ENCODE measurements at regions of chr14 and their contacts with region 1.

Region 1: DNA sequence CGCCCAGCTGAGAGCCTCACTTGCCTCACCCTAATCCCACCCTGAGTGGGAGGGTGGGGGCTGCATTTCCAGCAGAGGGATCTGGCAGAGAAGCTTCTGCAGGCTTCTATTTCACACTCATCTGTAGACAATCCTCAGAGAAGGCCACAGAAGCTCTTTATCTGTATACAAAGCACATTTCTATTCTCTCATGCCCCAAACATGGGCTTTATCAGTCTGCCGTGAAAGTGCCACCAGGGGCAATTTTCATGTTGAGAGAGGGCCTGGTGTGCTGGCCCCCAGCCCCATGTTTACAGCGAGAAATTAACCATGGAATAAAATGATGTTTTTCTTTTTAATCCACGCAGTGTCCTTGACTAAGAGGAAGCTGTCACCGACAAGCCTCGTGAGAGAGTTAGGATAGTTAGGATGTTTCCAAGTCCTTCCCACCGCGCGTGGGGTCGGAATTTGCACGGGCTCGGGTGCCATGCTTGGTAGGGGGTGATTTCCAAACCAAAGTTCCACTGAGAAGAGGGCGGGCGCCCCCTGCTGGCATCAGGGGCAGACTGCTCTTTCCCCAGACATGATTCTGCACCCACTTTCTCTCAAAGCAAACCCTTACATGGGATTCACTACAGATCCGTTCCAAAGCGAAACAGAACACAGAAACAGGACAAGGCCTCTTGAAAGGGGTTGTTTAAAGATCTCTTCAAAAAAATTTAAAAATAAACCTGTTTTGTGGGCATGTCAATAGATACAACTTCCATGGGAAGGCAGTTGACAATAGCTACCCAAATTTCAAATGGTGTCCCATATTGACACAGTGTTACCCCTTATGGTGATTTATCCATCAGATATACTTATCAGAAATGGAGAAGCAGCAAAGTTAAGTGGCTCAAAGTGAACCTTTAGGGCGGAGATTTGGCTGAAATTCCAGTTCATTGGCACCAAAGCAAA is 19.4 kb downstream of the BDKRB1 start:
- DNase-seq: peak; percentile 71 to 75

Region 2: GRCh38 chr14:96027431-96028355 is 247.8 kb before region 1 on chr14:
- in situ Hi-C with region 1: no loop called
- DNase-seq: no peak

Region 3: DNA sequence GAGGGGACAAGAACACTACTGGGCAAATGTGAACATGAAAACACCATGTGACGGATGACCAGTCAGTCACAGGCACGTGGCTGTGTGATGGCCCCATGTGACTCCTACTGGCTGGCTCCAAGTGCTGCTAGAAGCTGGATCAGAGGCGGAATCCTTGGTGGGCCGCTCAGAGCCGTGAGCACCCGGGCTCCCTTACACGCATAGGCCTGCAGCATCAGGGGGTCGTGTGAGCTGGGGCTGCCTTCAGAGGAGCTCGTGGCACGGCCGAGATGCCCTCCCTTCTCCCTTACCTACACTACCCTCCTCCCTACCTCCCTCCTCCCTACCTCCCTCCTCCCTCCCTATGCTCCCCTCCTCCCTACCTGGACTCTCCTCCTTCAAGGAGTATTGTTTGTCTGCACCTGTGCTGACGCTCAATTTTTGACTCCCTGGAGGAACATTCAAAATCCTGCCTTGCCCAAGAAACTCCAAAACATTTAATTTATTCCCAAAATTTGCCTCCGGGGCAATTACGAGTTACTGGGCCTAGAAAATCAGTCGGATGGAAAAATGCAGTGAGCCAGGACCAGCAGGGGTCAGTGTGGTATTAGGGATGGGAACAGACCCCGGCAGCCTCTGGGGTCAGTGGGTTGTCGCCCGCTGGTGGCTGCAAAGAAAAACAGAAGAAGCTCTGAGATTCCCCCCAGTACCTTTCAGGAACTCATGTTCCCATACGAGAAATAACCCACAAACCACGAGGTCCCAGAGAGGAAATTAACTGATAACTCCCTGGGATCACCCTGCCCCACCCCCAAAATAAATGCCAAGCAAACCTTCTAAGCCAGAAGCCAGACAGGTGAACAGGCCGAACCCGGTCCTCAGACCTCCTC is 175.1 kb before region 1 on chr14:
- in situ Hi-C with region 1: loop called (anchors 25 kb)
- DNase-seq: peak; percentile 50 to 87